ENCODE measurements at regions of chr13 and their contacts with region 1.

Region 1: GRCh38 chr13:81498969-81499368 is 1158.0 kb upstream of the SPRY2 start:
- DNase-seq: no peak
- ATAC-seq: no peak
- H3K4me3 ChIP-seq: no peak overlapping the region
- H3K27ac ChIP-seq: no peak overlapping the region
- H3K4me1 ChIP-seq: no peaks in the 10 kb centered on the region
- H3K27me3 ChIP-seq: no peaks in the 10 kb centered on the region
- CTCF ChIP-seq: no peak
- EP300 ChIP-seq: no peak
- POLR2A ChIP-seq: no peak
- RAD21 ChIP-seq: no peak

Region 2: DNA sequence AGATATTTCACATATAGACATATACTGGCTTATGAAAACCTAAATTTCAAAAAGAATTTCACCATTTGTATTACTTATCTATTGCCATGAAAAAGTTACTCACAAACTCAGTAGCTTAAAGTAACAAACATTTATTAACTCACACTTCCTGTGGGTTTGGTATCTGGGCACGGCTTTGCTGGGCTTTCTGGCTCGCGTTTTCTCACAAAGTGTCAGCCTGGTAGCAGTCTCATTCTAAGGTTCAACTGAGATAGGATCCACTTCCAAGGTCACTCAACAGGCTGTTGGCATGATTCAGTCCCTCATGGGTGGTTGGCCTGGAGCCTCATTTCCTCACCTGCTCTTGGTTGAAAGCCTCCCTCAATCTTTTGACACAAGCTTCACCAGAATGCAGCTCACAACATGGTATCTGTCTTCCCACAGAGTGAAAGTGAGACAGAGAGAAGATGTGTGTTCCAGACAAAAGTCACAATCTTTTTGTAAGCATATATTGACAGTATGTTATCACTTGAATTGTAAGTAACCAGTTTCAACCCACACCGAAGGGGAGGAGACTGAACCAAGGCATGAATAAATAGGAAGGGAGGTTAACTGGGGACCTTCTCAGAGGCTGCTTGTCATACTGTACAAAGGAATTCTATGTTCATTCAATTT is 92.2 kb before region 1 on chr13:
- CTCF ChIA-PET with region 1: no interaction called
- POLR2A ChIA-PET with region 1: no interaction called
- in situ Hi-C with region 1: loop called (anchors 25 kb)
- intact Hi-C with region 1: no loop called
- DNase-seq: no peak
- ATAC-seq: no peak
- H3K4me3 ChIP-seq: no peak overlapping the region
- H3K27ac ChIP-seq: no peak overlapping the region
- H3K4me1 ChIP-seq: no peaks in the 10 kb centered on the region
- H3K27me3 ChIP-seq: no peaks in the 10 kb centered on the region
- CTCF ChIP-seq: no peak
- EP300 ChIP-seq: no peak
- POLR2A ChIP-seq: no peak
- RAD21 ChIP-seq: no peak

Region 3: DNA sequence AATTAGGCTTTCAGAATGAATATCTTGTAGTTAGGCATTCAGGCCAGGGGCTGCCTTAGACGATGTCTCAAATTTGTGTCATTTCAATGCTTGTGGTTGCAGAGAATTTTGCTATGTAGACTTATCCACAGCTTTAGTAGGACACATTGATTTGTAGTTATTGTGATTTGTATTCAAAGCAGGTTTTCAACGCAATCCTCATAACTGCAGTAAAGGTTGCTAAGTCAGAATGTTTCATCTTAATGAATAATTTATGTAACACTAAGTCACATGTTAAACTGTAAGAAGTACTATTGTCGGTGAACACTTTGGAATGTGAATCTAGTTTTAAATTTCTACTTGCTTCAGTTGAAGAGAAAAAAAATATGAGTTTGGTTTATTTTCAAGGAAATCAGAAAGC is 40.8 kb before region 1 on chr13:
- CTCF ChIA-PET with region 1: no interaction called
- POLR2A ChIA-PET with region 1: no interaction called
- in situ Hi-C with region 1: no loop called
- intact Hi-C with region 1: no loop called
- DNase-seq: no peak
- ATAC-seq: no peak
- H3K4me3 ChIP-seq: no peak overlapping the region
- H3K27ac ChIP-seq: no peak overlapping the region
- H3K4me1 ChIP-seq: no peaks in the 10 kb centered on the region
- H3K27me3 ChIP-seq: no peaks in the 10 kb centered on the region; a peak in 1 of 5 replicates
- CTCF ChIP-seq: no peak
- EP300 ChIP-seq: no peak
- POLR2A ChIP-seq: no peak
- RAD21 ChIP-seq: no peak